Panc1 (cell line): ENCODE measurements at regions of chr17 and their contacts with region 1.

Region 1: GRCh38 chr17:72592242-72592966 is 471.6 kb downstream of the SOX9 start:
- DNase-seq: no peak
- ATAC-seq: peak; percentile 83
- H3K4me3 ChIP-seq: peak overlapping the region; percentile 89 to 94
- H3K27ac ChIP-seq: peak overlapping the region; percentile 96
- H3K4me1 ChIP-seq: peaks cover 26% of the 10 kb centered on the region
- H3K27me3 ChIP-seq: no peaks in the 10 kb centered on the region
- CTCF ChIP-seq: no peak

Region 2: DNA sequence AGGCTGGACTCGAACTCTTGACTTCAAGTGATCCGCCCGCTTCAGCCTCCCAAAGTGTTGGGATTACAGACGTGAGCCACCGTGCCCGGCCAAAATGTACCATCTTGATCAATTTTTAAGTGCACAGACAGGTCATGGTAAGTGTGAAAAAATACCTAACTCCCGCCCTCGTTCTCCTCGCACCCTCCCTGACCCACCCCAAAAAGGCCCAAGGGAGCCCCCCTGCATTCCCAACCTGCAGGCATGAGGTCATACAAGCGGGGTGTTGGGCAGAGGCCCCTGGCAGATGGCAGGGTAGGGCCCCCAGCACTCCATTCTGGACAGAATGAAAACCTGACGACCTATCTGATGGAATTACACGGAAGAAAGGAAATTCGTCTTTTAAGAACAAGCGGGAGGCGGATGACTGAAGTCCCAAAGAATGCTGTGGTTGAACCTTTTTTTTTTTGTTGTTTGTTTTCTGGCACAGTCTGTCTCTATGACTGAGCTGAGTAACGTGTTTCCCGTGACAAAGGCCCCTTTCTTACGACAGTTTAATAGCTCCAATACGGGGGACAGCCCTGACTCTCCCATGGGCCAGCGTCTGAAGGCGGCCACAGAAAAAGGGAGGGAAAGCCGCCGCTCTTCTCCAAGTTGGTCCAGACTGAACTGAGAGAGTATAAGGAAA is 123.6 kb after region 1 on chr17:
- CTCF ChIA-PET with region 1: no interaction called
- POLR2A ChIA-PET with region 1: interaction called, 3 read pairs
- in situ Hi-C with region 1: no loop called
- intact Hi-C with region 1: loop called (anchors 10 kb)
- DNase-seq: peak; percentile 81
- ATAC-seq: peak; percentile 93
- H3K4me3 ChIP-seq: peak overlapping the region in 1 of 2 experiments; percentile 22; a peak in 1 of 4 replicates
- H3K27ac ChIP-seq: peak overlapping the region; percentile 88
- H3K4me1 ChIP-seq: peaks cover 54% of the 10 kb centered on the region
- H3K27me3 ChIP-seq: no peaks in the 10 kb centered on the region
- CTCF ChIP-seq: no peak